AG04450 (cell line): ENCODE measurements at regions of chr6 and their contacts with region 1.

Region 1: GRCh38 chr6:26216356-26216885 is 129.2 kb downstream of the HFE start:
- DNase-seq: peak; percentile 99
- H3K4me3 ChIP-seq: peak overlapping the region; percentile 80
- H3K27ac ChIP-seq: peak overlapping the region; percentile 99
- H3K27me3 ChIP-seq: no peaks in the 10 kb centered on the region
- CTCF ChIP-seq: no peak

Region 2: GRCh38 chr6:25788305-25788922 is 428.0 kb before region 1 on chr6:
- CTCF ChIA-PET with region 1: no interaction called
- POLR2A ChIA-PET with region 1: no interaction called
- DNase-seq: peak; percentile 13
- H3K4me3 ChIP-seq: no peak overlapping the region
- H3K27ac ChIP-seq: no peak overlapping the region
- H3K27me3 ChIP-seq: no peaks in the 10 kb centered on the region
- CTCF ChIP-seq: peak; percentile 62

Region 3: DNA sequence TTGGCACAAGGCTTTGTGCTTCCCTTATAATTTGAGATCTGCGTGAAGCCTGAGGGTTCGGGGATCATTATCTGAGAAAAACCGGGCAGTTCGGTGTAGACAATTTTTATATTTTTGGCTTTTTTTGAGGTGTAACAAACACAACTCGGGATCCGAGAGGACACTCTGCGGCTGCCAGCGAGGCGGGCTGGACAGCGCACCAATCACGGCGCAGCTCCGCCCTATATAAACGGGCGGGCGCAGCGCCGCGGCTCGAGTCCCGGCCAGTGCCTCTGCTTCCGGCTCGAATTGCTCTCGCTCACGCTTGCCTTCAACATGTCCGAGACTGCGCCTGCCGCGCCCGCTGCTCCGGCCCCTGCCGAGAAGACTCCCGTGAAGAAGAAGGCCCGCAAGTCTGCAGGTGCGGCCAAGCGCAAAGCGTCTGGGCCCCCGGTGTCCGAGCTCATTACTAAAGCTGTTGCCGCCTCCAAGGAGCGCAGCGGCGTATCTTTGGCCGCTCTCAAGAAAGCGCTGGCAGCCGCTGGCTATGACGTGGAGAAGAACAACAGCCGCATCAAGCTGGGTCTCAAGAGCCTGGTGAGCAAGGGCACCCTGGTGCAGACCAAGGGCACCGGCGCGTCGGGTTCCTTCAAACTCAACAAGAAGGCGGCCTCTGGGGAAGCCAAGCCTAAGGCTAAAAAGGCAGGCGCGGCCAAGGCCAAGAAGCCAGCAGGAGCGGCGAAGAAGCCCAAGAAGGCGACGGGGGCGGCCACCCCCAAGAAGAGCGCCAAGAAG is 60.2 kb before region 1 on chr6:
- CTCF ChIA-PET with region 1: no interaction called
- POLR2A ChIA-PET with region 1: interaction called, 47 read pairs
- DNase-seq: peak; percentile 74
- H3K4me3 ChIP-seq: peak overlapping the region; percentile 83
- H3K27ac ChIP-seq: peak overlapping the region; percentile 97
- H3K27me3 ChIP-seq: no peaks in the 10 kb centered on the region
- CTCF ChIP-seq: peak; percentile 1; the same call in 1 of the 2 replicates

Region 4: GRCh38 chr6:26196846-26197648 is 19.4 kb before region 1 on chr6:
- CTCF ChIA-PET with region 1: interaction called, 3 read pairs
- POLR2A ChIA-PET with region 1: interaction called, 183 read pairs
- DNase-seq: peak; percentile 86
- H3K4me3 ChIP-seq: peak overlapping the region; percentile 88
- H3K27ac ChIP-seq: peak overlapping the region; percentile 91
- H3K27me3 ChIP-seq: no peaks in the 10 kb centered on the region
- CTCF ChIP-seq: no peak

Region 5: GRCh38 chr6:26249957-26250697 is 33.7 kb after region 1 on chr6:
- CTCF ChIA-PET with region 1: interaction called, 3 read pairs
- POLR2A ChIA-PET with region 1: interaction called, 39 read pairs
- DNase-seq: no peak
- H3K4me3 ChIP-seq: peak overlapping the region; percentile 77
- H3K27ac ChIP-seq: peak overlapping the region; percentile 87
- H3K27me3 ChIP-seq: no peaks in the 10 kb centered on the region
- CTCF ChIP-seq: peak; percentile 50

Region 6: GRCh38 chr6:27132532-27133280 is 916.3 kb after region 1 on chr6:
- CTCF ChIA-PET with region 1: no interaction called
- POLR2A ChIA-PET with region 1: interaction called, 10 read pairs
- DNase-seq: peak; percentile 100
- H3K4me3 ChIP-seq: peak overlapping the region; percentile 70
- H3K27ac ChIP-seq: peak overlapping the region; percentile 96
- H3K27me3 ChIP-seq: no peaks in the 10 kb centered on the region
- CTCF ChIP-seq: no peak